Mammary epithelial cell (primary cell): ENCODE measurements at regions of chr20 and their contacts with region 1.

Region 1: GRCh38 chr20:12740647-12741046 is 268.1 kb upstream of the SPTLC3 start:
- DNase-seq: no peak
- H3K4me3 ChIP-seq: no peak overlapping the region
- H3K27ac ChIP-seq: no peak overlapping the region
- H3K4me1 ChIP-seq: no peaks in the 10 kb centered on the region
- H3K27me3 ChIP-seq: peaks cover 3% of the 10 kb centered on the region
- CTCF ChIP-seq: peak in 1 of 2 donors; percentile 20

Region 2: DNA sequence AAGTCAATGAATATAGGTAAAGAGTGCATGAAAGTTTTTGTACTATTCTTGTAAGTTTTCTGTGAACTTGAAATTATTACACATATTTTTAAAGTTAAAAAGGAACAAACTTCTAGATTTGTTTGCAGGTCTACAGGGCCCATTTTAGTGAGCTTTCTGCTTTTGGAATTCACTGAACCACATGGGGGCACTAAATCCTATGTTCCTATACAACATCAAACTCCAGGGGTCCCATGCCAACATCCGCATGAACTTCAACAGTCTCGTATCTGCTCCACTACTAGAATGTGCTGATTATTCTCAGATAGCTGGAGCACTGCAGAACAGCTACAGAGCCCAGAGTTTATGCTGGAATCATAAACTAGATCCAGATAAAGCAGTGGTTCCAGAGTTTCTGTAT is 79.7 kb before region 1 on chr20:
- CTCF ChIA-PET with region 1: no interaction called
- dilution Hi-C with region 1: no loop called
- in situ Hi-C with region 1: no loop called
- intact Hi-C with region 1: loop called (anchors 5 kb)
- DNase-seq: peak; percentile 6
- H3K4me3 ChIP-seq: no peak overlapping the region
- H3K27ac ChIP-seq: no peak overlapping the region
- H3K4me1 ChIP-seq: no peaks in the 10 kb centered on the region
- H3K27me3 ChIP-seq: no peaks in the 10 kb centered on the region
- CTCF ChIP-seq: peak; percentile 22 to 51